CD8-positive, alpha-beta memory T cell (primary cell): ENCODE measurements at regions of chr18 and their contacts with region 1.

Region 1: DNA sequence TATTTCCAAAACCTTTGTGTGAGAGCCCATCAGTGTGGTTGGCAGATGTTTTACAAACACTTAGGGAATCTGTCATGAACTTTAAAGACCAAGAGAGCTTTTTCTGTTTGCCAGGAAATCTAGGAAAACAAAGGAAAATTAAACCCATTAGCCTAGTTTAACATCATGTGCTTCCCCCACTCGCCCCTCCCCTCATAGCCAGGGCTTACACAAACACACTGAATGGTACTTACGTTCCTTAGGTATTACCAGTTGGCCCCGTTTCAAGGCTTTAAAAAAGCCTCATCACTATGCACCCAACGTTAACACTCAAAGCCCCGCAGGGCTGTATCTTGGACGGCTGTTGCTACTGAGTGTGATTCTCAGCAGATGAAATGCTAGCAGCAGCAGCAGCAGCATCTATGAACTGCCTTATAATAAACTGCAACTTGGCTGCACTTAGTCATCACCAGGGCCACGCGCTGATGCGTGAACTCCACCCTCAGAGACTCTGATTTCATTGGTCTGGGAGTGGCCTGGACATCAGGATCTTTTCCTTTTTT is 20.1 kb upstream of the TTC39C start:
- DNase-seq: peak in 3 of 5 donors; percentile 23 to 65 (median 44)
- H3K4me3 ChIP-seq: no peak overlapping the region
- H3K4me3 Mint-ChIP-seq: peak overlapping the region; percentile 82 to 99 (median 90)
- H3K27ac ChIP-seq: peak overlapping the region; percentile 8
- H3K27ac Mint-ChIP-seq: peak overlapping the region; percentile 90 to 98 (median 94)
- H3K4me1 ChIP-seq: peaks cover 54% of the 10 kb centered on the region
- H3K4me1 Mint-ChIP-seq: peaks cover 72 to 93% (median 88%) of the 10 kb centered on the region in 3 donors
- H3K27me3 ChIP-seq: no peaks in the 10 kb centered on the region
- H3K27me3 Mint-ChIP-seq: no peaks in the 10 kb centered on the region

Region 2: GRCh38 chr18:23864624-23865023 is 129.8 kb before region 1 on chr18:
- CTCF ChIA-PET with region 1: no interaction called
- POLR2A ChIA-PET with region 1: interaction called, 13 read pairs
- DNase-seq: peak; percentile 16 to 71 (median 28)
- H3K4me3 ChIP-seq: peak overlapping the region; percentile 26
- H3K4me3 Mint-ChIP-seq: peak overlapping the region in 5 of 7 donors; percentile 11 to 79 (median 61)
- H3K27ac ChIP-seq: peak overlapping the region; percentile 27
- H3K27ac Mint-ChIP-seq: peak overlapping the region; percentile 72 to 97 (median 88)
- H3K4me1 ChIP-seq: peaks cover 40% of the 10 kb centered on the region
- H3K4me1 Mint-ChIP-seq: peaks cover 57 to 66% (median 59%) of the 10 kb centered on the region in 3 donors
- H3K27me3 ChIP-seq: no peaks in the 10 kb centered on the region
- H3K27me3 Mint-ChIP-seq: no peaks in the 10 kb centered on the region

Region 3: DNA sequence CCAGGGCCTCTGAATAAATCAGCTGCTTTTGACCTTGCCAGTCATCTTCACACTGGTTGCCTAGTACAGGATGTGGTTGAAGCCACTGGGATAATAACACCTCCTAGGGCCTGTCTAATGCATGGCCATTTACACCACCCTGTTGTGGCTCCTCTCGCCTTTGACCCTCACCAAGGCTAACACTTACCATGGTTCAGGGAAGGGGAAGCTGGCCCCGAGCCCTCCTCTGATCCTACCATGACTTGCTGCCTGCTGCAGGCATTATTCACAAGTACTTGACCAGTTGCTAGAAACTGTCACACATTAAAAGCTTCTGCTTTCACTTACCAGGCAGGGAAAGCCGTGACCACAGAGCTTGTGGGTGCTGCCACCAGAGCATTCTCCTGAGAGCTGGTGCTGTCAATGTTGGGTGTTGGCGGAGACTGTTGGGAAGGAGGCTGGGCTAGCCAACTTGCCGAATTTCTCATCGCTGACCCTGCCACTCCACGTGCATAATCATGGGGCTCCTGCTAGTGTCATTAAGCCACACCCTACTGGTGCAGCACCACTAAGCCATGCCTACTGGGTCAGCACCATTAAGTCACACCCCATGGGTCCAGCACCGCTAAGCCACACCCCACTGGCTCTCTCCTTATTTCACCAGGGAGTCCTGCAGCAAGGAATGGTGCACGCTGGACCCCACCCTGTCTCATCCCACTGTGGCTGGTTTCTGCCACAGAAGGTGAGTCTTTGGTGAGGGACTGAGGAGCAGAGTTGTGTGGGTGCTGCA is 26.9 kb before region 1 on chr18:
- CTCF ChIA-PET with region 1: interaction called, 44 read pairs
- POLR2A ChIA-PET with region 1: interaction called, 15 read pairs
- DNase-seq: peak in 4 of 5 donors; percentile 13 to 66 (median 33)
- H3K4me3 ChIP-seq: no peak overlapping the region
- H3K4me3 Mint-ChIP-seq: peak overlapping the region in 6 of 7 donors; percentile 58 to 87 (median 68)
- H3K27ac ChIP-seq: no peak overlapping the region
- H3K27ac Mint-ChIP-seq: peak overlapping the region; percentile 66 to 98 (median 86)
- H3K4me1 ChIP-seq: peaks cover 80% of the 10 kb centered on the region
- H3K4me1 Mint-ChIP-seq: peaks cover 83 to 88% (median 86%) of the 10 kb centered on the region in 3 donors
- H3K27me3 ChIP-seq: no peaks in the 10 kb centered on the region
- H3K27me3 Mint-ChIP-seq: no peaks in the 10 kb centered on the region

Region 4: DNA sequence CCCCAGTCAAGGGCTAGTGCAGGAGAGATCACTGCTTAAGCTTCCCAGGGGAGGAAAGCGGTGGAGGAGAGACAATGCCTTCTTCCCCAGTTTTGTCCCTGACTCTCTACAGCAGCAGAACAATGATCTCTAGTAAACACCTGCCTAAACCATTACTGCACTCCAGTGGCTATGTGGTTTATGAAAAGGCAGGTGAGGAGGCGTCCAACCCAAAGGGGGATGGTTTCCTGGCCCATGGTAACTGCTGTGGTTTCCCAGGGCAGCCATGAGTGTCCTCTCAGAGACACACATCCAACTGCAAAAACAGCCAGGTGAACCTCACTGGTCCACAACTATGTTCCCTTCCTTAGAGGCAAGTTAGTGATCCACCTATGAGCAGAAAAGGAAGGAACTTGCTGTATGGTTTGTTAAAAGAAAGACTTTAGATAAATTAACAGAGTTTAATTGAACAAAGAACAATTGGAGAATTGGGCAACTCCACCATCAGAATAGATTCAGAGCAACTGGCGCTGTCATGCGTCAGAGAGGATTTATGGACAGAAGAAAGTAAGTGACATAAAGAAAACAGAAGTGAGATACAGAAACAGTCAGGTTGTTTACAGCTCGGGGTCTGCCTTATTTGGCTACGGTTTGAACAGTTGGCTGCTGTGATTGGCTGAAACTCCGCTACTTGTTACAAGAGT is 15.4 kb after region 1 on chr18:
- CTCF ChIA-PET with region 1: interaction called, 10 read pairs
- POLR2A ChIA-PET with region 1: interaction called, 5 read pairs
- DNase-seq: peak in 2 of 5 donors; percentile 36 to 52
- H3K4me3 ChIP-seq: peak overlapping the region; percentile 9
- H3K4me3 Mint-ChIP-seq: peak overlapping the region; percentile 45 to 84 (median 70)
- H3K27ac ChIP-seq: no peak overlapping the region
- H3K27ac Mint-ChIP-seq: peak overlapping the region; percentile 82 to 98 (median 96)
- H3K4me1 ChIP-seq: peaks cover 79% of the 10 kb centered on the region
- H3K4me1 Mint-ChIP-seq: peaks cover 70 to 76% (median 76%) of the 10 kb centered on the region in 3 donors
- H3K27me3 ChIP-seq: no peaks in the 10 kb centered on the region
- H3K27me3 Mint-ChIP-seq: peaks cover 0 to 4% of the 10 kb centered on the region in 2 donors

Region 5: GRCh38 chr18:24153397-24153796 is 159.0 kb after region 1 on chr18:
- CTCF ChIA-PET with region 1: no interaction called
- POLR2A ChIA-PET with region 1: no interaction called
- DNase-seq: no peak
- H3K4me3 ChIP-seq: no peak overlapping the region
- H3K4me3 Mint-ChIP-seq: no peak overlapping the region
- H3K27ac ChIP-seq: no peak overlapping the region
- H3K27ac Mint-ChIP-seq: no peak overlapping the region
- H3K4me1 ChIP-seq: no peaks in the 10 kb centered on the region
- H3K4me1 Mint-ChIP-seq: no peaks in the 10 kb centered on the region
- H3K27me3 ChIP-seq: no peaks in the 10 kb centered on the region
- H3K27me3 Mint-ChIP-seq: peaks cover 0 to 5% of the 10 kb centered on the region in 2 donors